Natural killer cell (primary cell): ENCODE measurements at regions of chrX and their contacts with region 1.

Region 1: GRCh38 chrX:3638280-3638873 is 75.1 kb downstream of the PRKX start:
- DNase-seq: peak in 1 of 2 donors; percentile 55
- ATAC-seq: peak in 2 of 3 donors; percentile 49 to 68
- H3K4me3 ChIP-seq: no peak overlapping the region
- H3K4me3 Mint-ChIP-seq: no peak overlapping the region
- H3K27ac ChIP-seq: no peak overlapping the region
- H3K27ac Mint-ChIP-seq: peak overlapping the region; percentile 1 to 5
- H3K4me1 ChIP-seq: no peaks in the 10 kb centered on the region
- H3K4me1 Mint-ChIP-seq: peaks cover 5 to 13% of the 10 kb centered on the region in 2 donors
- H3K27me3 ChIP-seq: no peaks in the 10 kb centered on the region
- H3K27me3 Mint-ChIP-seq: no peaks in the 10 kb centered on the region
- CTCF ChIP-seq: peak; percentile 42

Region 2: GRCh38 chrX:2875798-2876399 is 762.5 kb before region 1 on chrX:
- intact Hi-C with region 1: loop called (anchors 5 kb)
- DNase-seq: peak in 1 of 2 donors; percentile 2
- ATAC-seq: peak in 2 of 3 donors; percentile 42 to 53
- H3K4me3 ChIP-seq: no peak overlapping the region
- H3K4me3 Mint-ChIP-seq: no peak overlapping the region
- H3K27ac ChIP-seq: no peak overlapping the region
- H3K27ac Mint-ChIP-seq: no peak overlapping the region
- H3K4me1 ChIP-seq: no peaks in the 10 kb centered on the region
- H3K4me1 Mint-ChIP-seq: no peaks in the 10 kb centered on the region
- H3K27me3 ChIP-seq: no peaks in the 10 kb centered on the region
- H3K27me3 Mint-ChIP-seq: peaks cover 8 to 14% of the 10 kb centered on the region in 2 donors
- CTCF ChIP-seq: peak; percentile 48